BJ (cell line): ENCODE measurements at regions of chr11 and their contacts with region 1.

Region 1: DNA sequence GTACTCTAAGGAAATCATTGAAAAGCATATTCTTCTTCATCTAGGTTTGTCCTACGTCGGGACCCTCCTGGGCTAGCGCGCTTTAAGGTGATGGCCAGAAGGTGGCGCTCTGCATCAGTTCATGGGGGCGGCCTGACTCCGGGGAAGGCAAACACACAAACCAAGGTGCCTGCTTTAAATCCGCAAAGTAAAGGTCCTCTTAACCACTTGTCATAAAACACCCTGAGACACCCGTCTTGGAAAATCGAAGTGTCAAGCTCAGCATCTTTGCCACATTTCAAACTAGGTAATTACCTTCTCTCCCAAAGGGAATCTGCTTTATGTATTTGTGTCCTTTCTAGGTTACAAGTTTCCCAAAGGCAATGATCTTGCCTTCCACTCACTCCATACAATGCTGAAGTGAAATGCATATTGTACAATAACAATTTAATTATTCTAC is 33.9 kb downstream of the LMO2 start:
- DNase-seq: peak; percentile 1
- H3K4me3 ChIP-seq: no peak overlapping the region
- H3K27me3 ChIP-seq: peaks cover 21% of the 10 kb centered on the region
- CTCF ChIP-seq: peak; percentile 93

Region 2: GRCh38 chr11:33828604-33829432 is 29.1 kb before region 1 on chr11:
- CTCF ChIA-PET with region 1: no interaction called
- POLR2A ChIA-PET with region 1: no interaction called
- DNase-seq: no peak
- H3K4me3 ChIP-seq: peak overlapping the region; percentile 31
- H3K27me3 ChIP-seq: peaks cover 19% of the 10 kb centered on the region; the same call in 1 of the 2 replicates
- CTCF ChIP-seq: no peak

Region 3: DNA sequence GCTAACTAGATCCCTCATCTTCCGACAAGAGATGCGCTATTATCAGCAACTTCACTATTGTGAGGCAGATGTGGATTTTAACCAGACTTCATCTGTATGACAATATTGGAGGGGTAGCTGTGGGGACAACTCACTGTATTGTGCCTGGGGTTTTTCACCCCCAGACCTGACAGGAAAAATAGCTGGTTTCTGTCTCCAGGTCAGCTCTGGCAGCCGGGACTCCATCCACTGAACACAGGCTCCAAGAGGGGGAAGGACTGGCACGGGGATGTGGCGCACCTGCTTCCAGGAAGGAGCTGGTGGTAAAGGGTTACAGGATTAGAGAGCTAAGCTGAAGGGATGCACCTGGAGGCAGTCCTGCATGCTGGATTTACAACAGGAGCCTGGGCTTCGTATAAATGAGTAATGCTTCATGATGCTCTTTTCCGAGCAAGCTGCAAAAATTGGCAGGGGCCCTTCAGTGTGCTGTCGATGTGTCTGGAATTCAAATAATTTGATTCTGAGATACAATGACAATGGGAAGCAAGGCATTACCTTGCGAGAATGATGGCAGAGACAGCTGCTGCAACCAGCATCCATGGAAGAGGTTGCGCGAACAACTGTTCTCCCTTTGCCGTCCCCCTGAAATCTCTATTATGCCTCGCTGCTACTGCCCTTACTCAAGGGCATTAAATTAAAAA is 15.6 kb before region 1 on chr11:
- CTCF ChIA-PET with region 1: interaction called, 21 read pairs
- POLR2A ChIA-PET with region 1: no interaction called
- DNase-seq: no peak
- H3K4me3 ChIP-seq: no peak overlapping the region
- H3K27me3 ChIP-seq: peaks cover 16% of the 10 kb centered on the region
- CTCF ChIP-seq: no peak

Region 4: DNA sequence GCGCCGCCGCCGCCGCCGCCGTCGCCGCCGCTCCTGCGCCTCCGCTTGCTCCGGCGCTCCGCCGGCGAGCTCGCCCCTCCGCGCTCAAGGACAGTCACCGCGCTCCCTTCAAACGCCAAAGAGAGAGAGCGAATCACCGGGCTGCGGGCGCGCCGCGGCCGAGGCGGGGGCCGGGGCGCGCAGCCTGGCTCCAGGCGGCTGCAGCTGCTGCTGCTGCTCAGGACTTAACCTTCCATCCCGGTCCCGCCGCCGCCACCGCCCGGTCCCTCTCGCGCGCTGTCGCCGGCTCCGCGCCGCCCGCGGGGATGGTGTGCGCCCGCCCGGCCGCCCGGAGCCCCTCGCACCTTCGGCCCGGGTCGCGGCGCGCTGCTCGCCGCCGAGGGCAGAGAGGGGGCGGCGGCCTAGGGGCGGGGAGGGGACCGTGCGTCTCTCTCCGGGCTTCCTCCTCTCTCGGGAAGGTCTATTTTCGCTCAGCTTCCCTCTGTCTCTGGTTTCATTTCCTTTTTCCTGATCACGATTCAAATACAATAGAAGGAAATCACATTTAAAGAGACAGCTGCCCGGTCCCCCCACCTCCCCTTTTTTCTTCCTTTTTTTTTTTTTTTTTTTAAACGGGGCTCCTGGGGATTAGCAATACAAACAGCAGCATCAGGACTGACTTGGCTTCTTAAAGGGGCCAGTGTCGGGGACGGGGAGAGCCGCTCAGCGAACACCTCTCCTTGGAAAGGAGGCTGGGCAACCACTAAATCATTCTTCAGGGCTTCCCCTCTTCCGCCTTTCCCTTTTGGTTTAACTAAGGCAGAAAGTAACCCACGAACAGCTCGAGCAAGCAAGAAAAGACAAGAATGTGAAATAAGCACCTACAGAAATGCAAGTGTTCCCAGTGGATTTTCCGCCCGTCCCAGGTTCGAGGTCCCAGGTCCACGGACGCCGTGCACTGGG is 11.8 kb after region 1 on chr11:
- CTCF ChIA-PET with region 1: interaction called, 35 read pairs
- POLR2A ChIA-PET with region 1: no interaction called
- DNase-seq: no peak
- H3K4me3 ChIP-seq: peak overlapping the region; percentile 43
- H3K27me3 ChIP-seq: peaks cover 37% of the 10 kb centered on the region
- CTCF ChIP-seq: no peak

Region 5: GRCh38 chr11:33976495-33977199 is 118.7 kb after region 1 on chr11:
- CTCF ChIA-PET with region 1: interaction called, 81 read pairs
- POLR2A ChIA-PET with region 1: no interaction called
- DNase-seq: no peak
- H3K4me3 ChIP-seq: no peak overlapping the region
- H3K27me3 ChIP-seq: peaks cover 6% of the 10 kb centered on the region; the same call in 1 of the 2 replicates
- CTCF ChIP-seq: no peak